ENCODE measurements at regions of chr9 and their contacts with region 1.

Region 1: GRCh38 chr9:7799234-7799943 is at the start of gene DMAC1:
- DNase-seq: peak; percentile 41
- ATAC-seq: peak; percentile 97
- H3K4me3 ChIP-seq: peak within 1 kb of the TSS; percentile 78
- H3K27ac ChIP-seq: peak within 1 kb of the TSS; percentile 87
- H3K4me1 ChIP-seq: no peaks in the 10 kb centered on the region
- H3K27me3 ChIP-seq: no peaks in the 10 kb centered on the region
- CTCF ChIP-seq: no peak
- EP300 ChIP-seq: no peak
- POLR2A ChIP-seq: peak; percentile 88
- RAD21 ChIP-seq: no peak
- polyA plus RNA-seq, gene DMAC1: 25.5 to 55.4 TPM

Region 2: GRCh38 chr9:6907772-6908381 is 891.5 kb before region 1 on chr9:
- CTCF ChIA-PET with region 1: no interaction called
- POLR2A ChIA-PET with region 1: no interaction called
- RAD21 ChIA-PET with region 1: no interaction called
- SMC1A ChIA-PET with region 1: no interaction called
- in situ Hi-C with region 1: loop called (anchors 25 kb)
- intact Hi-C with region 1: no loop called
- DNase-seq: no peak
- ATAC-seq: 0 out of 3 replicates have a peak, but pooled peaks have one; percentile 17
- H3K4me3 ChIP-seq: no peak overlapping the region
- H3K27ac ChIP-seq: no peak overlapping the region
- H3K4me1 ChIP-seq: no peaks in the 10 kb centered on the region
- H3K27me3 ChIP-seq: no peaks in the 10 kb centered on the region
- CTCF ChIP-seq: peak; percentile 35 to 47 (median 42); a peak in 4 of 6 replicates
- EP300 ChIP-seq: no peak
- POLR2A ChIP-seq: no peak
- RAD21 ChIP-seq: peak; percentile 66

Region 3: GRCh38 chr9:7601739-7602138 is 197.7 kb before region 1 on chr9:
- CTCF ChIA-PET with region 1: no interaction called
- POLR2A ChIA-PET with region 1: no interaction called
- RAD21 ChIA-PET with region 1: no interaction called
- SMC1A ChIA-PET with region 1: no interaction called
- in situ Hi-C with region 1: no loop called
- intact Hi-C with region 1: no loop called
- DNase-seq: no peak
- ATAC-seq: no peak
- H3K4me3 ChIP-seq: no peak overlapping the region
- H3K27ac ChIP-seq: no peak overlapping the region
- H3K4me1 ChIP-seq: no peaks in the 10 kb centered on the region
- H3K27me3 ChIP-seq: no peaks in the 10 kb centered on the region
- CTCF ChIP-seq: no peak
- EP300 ChIP-seq: no peak
- POLR2A ChIP-seq: no peak
- RAD21 ChIP-seq: no peak

Region 4: DNA sequence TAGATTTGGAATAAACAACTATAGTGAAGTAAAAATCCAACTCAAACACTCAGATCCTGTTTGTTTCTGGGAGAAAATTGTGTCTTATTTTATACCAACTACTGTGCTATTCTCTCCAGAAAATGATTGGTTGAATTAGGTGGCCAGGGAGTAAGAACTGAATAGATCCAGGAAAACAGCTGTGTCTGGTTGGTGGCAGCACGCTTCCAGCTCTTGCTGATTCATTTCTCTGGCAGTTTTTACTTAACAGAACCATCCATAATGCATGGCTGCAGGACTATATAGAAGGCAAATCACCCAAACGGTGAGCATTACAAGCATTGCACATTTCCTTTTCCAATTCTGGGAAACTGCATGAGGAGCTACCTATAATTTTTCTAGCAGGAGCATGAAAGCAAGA is 29.3 kb before region 1 on chr9:
- CTCF ChIA-PET with region 1: no interaction called
- POLR2A ChIA-PET with region 1: no interaction called
- RAD21 ChIA-PET with region 1: no interaction called
- SMC1A ChIA-PET with region 1: no interaction called
- in situ Hi-C with region 1: no loop called
- intact Hi-C with region 1: no loop called
- DNase-seq: no peak
- ATAC-seq: no peak
- H3K4me3 ChIP-seq: no peak overlapping the region
- H3K27ac ChIP-seq: no peak overlapping the region
- H3K4me1 ChIP-seq: no peaks in the 10 kb centered on the region
- H3K27me3 ChIP-seq: no peaks in the 10 kb centered on the region
- CTCF ChIP-seq: no peak
- EP300 ChIP-seq: no peak
- POLR2A ChIP-seq: no peak
- RAD21 ChIP-seq: no peak

Region 5: DNA sequence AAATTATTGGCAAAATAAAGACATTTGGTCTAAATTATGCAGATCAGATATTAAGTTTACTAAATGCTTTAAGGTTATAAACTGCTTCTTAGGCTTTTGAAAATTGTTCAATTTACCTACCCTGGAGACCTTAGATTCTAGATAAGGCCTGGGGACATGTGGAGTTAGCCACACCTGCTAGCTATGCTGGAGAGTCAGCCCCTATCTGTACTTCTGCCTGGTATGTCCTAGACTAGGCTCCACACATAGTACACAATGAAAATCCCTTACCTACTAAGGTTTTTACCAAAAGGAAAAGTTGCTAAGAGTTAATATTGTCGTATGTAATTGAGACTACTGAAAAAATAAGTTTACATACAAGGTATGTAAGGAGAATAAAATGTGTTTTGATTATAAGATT is 50.0 kb after region 1 on chr9:
- CTCF ChIA-PET with region 1: no interaction called
- POLR2A ChIA-PET with region 1: no interaction called
- RAD21 ChIA-PET with region 1: no interaction called
- SMC1A ChIA-PET with region 1: no interaction called
- in situ Hi-C with region 1: no loop called
- intact Hi-C with region 1: no loop called
- DNase-seq: no peak
- ATAC-seq: no peak
- H3K4me3 ChIP-seq: no peak overlapping the region
- H3K27ac ChIP-seq: no peak overlapping the region
- H3K4me1 ChIP-seq: no peaks in the 10 kb centered on the region
- H3K27me3 ChIP-seq: no peaks in the 10 kb centered on the region
- CTCF ChIP-seq: no peak
- EP300 ChIP-seq: no peak
- POLR2A ChIP-seq: no peak
- RAD21 ChIP-seq: no peak

Region 6: DNA sequence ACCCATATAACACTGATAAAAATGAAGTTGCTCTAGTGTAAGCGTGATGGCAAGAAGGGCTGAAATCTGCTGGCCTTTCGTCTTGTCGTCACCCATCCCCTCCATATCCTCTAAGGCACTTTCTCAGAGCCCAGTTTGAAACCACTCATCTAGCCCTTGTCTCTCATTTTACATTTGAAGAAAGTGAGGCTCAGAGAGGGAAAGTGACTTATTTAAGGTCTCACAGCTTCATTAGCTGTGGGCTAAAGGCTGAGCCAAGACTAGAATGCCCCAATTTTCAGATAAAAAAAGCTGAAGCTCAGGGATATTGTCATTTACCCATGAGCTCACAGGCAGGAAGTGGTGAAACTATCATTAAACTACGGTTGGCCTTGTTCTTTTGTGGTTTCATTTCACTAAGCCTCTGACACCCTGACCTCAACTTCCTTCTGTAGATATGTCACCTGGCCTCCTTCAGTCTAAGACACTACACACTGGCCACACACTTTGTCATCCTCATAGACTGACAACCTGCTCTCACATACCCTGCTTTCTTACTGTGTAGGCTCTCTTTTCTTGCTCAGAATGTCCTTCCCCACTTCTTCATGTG is 176.9 kb after region 1 on chr9:
- CTCF ChIA-PET with region 1: no interaction called
- POLR2A ChIA-PET with region 1: no interaction called
- RAD21 ChIA-PET with region 1: no interaction called
- SMC1A ChIA-PET with region 1: interaction called, 3 read pairs
- in situ Hi-C with region 1: loop called (anchors 10 kb)
- intact Hi-C with region 1: loop called (anchors 5 kb)
- DNase-seq: peak; percentile 89
- ATAC-seq: peak; percentile 98
- H3K4me3 ChIP-seq: no peak overlapping the region
- H3K27ac ChIP-seq: peak overlapping the region; percentile 74
- H3K4me1 ChIP-seq: peaks cover 38% of the 10 kb centered on the region
- H3K27me3 ChIP-seq: no peaks in the 10 kb centered on the region
- CTCF ChIP-seq: no peak
- EP300 ChIP-seq: peak; percentile 93 to 96; a peak in 3 of 4 replicates
- POLR2A ChIP-seq: 0 out of 2 replicates have a peak, but pooled peaks have one; percentile 35
- RAD21 ChIP-seq: no peak